ENCODE measurements at regions of chr4 and their contacts with region 1.

Region 1: GRCh38 chr4:147096667-147097604 is 151.3 kb upstream of the TTC29 start:
- DNase-seq: peak in 1 of 2 donors; percentile 67
- ATAC-seq: peak in 1 of 3 donors; percentile 59
- H3K4me3 ChIP-seq: no peak overlapping the region
- H3K4me3 Mint-ChIP-seq: no peak overlapping the region
- H3K27ac ChIP-seq: no peak overlapping the region
- H3K27ac Mint-ChIP-seq: no peak overlapping the region
- H3K4me1 ChIP-seq: no peaks in the 10 kb centered on the region
- H3K4me1 Mint-ChIP-seq: no peaks in the 10 kb centered on the region
- H3K27me3 ChIP-seq: no peaks in the 10 kb centered on the region
- H3K27me3 Mint-ChIP-seq: peaks cover 8 to 9% of the 10 kb centered on the region in 2 donors
- CTCF ChIP-seq: peak; percentile 75

Region 2: DNA sequence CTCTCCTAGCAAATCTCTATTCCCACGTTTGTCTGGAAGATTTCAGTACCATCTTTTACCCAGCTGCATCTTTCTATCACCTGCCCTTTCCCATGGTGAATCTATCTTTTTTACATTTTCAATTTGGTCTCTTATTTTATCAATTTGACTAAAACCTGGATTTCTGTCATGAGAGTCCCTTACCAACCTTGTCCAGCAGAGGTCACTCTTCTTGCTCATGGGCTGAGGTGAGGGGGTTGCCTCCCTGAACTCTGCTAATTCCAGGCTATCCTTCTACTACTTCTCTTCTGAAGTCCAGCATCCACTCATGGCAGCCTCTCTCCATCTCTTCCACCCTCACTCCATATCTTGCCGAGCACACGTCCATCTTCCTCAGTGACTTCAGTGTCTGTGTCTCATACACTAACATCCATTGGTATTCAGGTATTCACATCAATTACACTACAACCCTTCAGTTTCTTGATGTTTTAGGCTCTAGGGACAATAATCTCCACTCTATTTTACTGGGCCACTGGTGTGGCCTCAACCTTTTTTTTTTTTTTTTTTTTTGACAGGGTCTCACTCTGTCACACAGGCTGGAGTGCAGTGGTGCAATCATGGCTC is 1140.5 kb before region 1 on chr4:
- intact Hi-C with region 1: loop called (anchors 10 kb)
- DNase-seq: peak in 1 of 2 donors; percentile 74
- ATAC-seq: peak in 2 of 3 donors; percentile 76
- H3K4me3 ChIP-seq: no peak overlapping the region
- H3K4me3 Mint-ChIP-seq: no peak overlapping the region
- H3K27ac ChIP-seq: no peak overlapping the region
- H3K27ac Mint-ChIP-seq: no peak overlapping the region
- H3K4me1 ChIP-seq: no peaks in the 10 kb centered on the region
- H3K4me1 Mint-ChIP-seq: no peaks in the 10 kb centered on the region
- H3K27me3 ChIP-seq: no peaks in the 10 kb centered on the region
- H3K27me3 Mint-ChIP-seq: peaks cover 7 to 12% of the 10 kb centered on the region in 2 donors
- CTCF ChIP-seq: peak; percentile 65

Region 3: DNA sequence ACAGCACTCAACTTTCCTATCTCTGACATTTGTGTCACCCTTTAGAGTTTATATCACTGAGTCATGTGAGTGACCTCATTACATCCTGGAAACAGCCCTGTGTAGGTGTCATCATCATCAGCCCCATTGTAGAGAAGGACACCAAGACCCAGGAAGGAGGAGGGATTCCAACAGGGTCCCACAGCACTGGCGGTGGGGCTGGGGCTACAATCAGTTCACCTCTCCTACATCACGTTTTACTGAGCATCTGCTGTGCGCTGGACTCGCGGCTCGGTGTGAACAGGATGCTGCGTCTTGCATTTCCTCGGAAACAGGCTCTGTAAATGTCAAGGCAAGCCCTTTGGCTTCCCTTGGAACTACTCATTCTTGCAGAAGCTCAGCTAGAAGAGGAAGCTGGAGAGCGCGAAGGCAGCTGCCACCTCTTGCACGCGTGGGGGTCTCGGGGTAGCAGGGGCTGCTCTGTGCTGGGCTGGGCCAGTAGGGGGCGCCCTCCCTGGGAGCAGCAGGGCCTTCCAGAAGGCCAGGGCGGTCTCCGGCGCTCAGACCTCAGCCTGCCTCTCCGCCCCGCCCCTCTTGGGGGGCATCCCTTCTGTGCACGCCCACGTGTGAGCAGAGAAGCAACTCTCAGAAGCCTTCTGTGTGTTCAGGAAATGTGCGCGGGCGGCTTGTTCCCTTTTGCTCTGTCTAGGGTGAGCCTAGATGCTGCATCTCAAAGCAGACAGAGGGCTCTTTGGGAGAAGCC is 853.6 kb before region 1 on chr4:
- intact Hi-C with region 1: loop called (anchors 1 kb)
- DNase-seq: peak; percentile 18 to 58
- ATAC-seq: peak; percentile 48 to 74 (median 73)
- H3K4me3 ChIP-seq: no peak overlapping the region
- H3K4me3 Mint-ChIP-seq: no peak overlapping the region
- H3K27ac ChIP-seq: no peak overlapping the region
- H3K27ac Mint-ChIP-seq: no peak overlapping the region
- H3K4me1 ChIP-seq: peaks cover 9% of the 10 kb centered on the region
- H3K4me1 Mint-ChIP-seq: peaks cover 4 to 9% of the 10 kb centered on the region in 2 donors
- H3K27me3 ChIP-seq: no peaks in the 10 kb centered on the region
- H3K27me3 Mint-ChIP-seq: peaks cover 0 to 2% of the 10 kb centered on the region in 2 donors
- CTCF ChIP-seq: peak; percentile 32

Region 4: DNA sequence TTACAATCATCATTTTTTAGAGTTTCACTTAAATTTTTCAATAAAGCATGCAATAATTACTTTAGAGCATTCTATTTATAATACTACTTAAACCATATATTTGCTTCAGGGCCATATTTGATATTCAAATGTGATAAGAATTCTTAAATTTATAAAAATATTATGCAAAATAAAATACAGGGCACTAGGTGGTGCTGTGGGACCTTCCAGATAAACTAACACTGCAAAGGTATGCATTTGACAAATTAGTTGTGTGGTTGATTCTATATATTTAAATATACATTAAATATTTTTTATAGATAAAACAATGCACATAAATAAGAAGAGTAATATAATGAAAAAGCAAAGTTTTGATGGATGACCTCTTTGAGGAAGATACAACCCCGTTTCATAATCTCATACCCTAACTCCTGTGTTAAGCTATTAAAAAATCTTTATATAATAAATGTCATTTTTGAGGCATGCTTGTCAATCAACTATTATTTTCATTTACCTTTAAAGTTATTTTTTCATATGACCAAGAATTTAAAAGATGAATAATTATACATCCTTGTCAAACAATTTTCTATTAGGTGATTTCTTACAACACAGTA is 754.2 kb before region 1 on chr4:
- intact Hi-C with region 1: loop called (anchors 1 kb)
- DNase-seq: peak in 1 of 2 donors; percentile 66
- ATAC-seq: peak in 1 of 3 donors; percentile 55
- H3K4me3 ChIP-seq: no peak overlapping the region
- H3K4me3 Mint-ChIP-seq: no peak overlapping the region
- H3K27ac ChIP-seq: no peak overlapping the region
- H3K27ac Mint-ChIP-seq: no peak overlapping the region
- H3K4me1 ChIP-seq: no peaks in the 10 kb centered on the region
- H3K4me1 Mint-ChIP-seq: peaks cover 0 to 17% of the 10 kb centered on the region in 2 donors
- H3K27me3 ChIP-seq: no peaks in the 10 kb centered on the region
- H3K27me3 Mint-ChIP-seq: no peaks in the 10 kb centered on the region
- CTCF ChIP-seq: peak; percentile 81

Region 5: GRCh38 chr4:147050356-147050765 is 46.6 kb before region 1 on chr4:
- intact Hi-C with region 1: no loop called
- DNase-seq: no peak
- ATAC-seq: no peak
- H3K4me3 ChIP-seq: no peak overlapping the region
- H3K4me3 Mint-ChIP-seq: no peak overlapping the region
- H3K27ac ChIP-seq: no peak overlapping the region
- H3K27ac Mint-ChIP-seq: no peak overlapping the region
- H3K4me1 ChIP-seq: no peaks in the 10 kb centered on the region
- H3K4me1 Mint-ChIP-seq: no peaks in the 10 kb centered on the region
- H3K27me3 ChIP-seq: no peaks in the 10 kb centered on the region
- H3K27me3 Mint-ChIP-seq: peaks cover 21 to 24% of the 10 kb centered on the region in 2 donors
- CTCF ChIP-seq: no peak

Measured in natural killer cell (primary cell).